ENCODE measurements at regions of chr12 and their contacts with region 1.

Region 1: GRCh38 chr12:9331218-9331626 is 123.0 kb upstream of the PZP start:
- DNase-seq: peak; percentile 91
- H3K4me3 Mint-ChIP-seq: no peak overlapping the region
- H3K27ac Mint-ChIP-seq: no peak overlapping the region
- H3K4me1 Mint-ChIP-seq: peaks cover 18% of the 10 kb centered on the region
- H3K27me3 Mint-ChIP-seq: no peaks in the 10 kb centered on the region

Region 2: DNA sequence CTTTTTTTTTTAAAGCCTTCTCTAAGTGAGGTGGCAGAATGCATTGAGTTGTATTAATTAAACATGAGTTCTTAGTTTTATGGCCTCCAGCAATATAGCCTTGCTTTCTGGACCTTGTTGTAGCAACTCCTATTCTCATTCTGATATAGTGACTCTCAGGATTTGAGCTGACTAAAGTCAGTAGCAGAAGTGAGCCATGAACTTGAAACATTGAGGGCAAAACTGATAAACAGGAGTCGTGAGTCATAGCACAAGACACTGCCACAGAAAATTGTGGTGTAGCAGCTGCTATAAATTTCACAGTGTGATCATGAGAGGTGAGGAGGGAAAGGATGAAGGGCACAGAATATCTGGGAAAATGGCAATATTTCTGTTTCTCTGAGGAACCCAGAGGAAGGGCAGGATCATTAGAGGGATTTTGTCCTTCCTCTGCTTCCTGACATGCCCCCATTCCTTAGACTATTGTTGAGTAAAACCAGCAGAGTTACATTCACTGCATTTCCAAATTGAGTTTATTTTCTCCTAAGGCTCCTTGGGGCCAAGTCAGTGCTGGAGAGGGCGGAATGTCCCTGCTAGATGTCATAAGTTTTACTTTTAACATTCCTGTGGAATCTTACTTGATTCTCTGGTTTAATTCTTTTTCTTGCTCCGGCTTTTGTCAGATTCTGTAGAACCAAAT is 334.4 kb before region 1 on chr12:
- intact Hi-C with region 1: no loop called
- DNase-seq: peak; percentile 70
- H3K4me3 Mint-ChIP-seq: no peak overlapping the region
- H3K27ac Mint-ChIP-seq: no peak overlapping the region
- H3K4me1 Mint-ChIP-seq: peaks cover 15% of the 10 kb centered on the region
- H3K27me3 Mint-ChIP-seq: peaks cover 18% of the 10 kb centered on the region

Region 3: GRCh38 chr12:9364224-9365176 is 33.3 kb after region 1 on chr12:
- intact Hi-C with region 1: loop called (anchors 5 kb)
- DNase-seq: peak; percentile 81
- H3K4me3 Mint-ChIP-seq: peak overlapping the region; percentile 66
- H3K27ac Mint-ChIP-seq: peak overlapping the region; percentile 88
- H3K4me1 Mint-ChIP-seq: peaks cover 40% of the 10 kb centered on the region
- H3K27me3 Mint-ChIP-seq: peaks cover 33% of the 10 kb centered on the region

Region 4: DNA sequence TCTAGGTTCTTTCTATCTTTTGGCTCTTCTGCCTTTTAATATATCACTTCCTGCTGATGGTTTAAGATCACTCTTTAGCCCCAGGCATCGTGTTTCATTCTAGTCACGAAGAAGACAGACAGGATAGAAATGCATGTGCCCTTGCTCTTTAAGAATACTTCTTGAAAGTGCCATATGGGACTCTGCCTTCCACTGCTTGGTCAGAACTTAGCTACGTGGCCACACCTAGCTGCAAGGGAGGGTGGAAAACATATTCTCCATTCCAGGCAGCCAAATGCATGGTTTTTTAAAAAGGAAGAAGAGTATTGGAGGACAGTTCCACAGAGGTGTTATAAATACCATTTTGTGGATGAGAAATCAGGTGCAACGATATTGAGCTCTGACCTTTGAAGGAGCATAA is 133.2 kb after region 1 on chr12:
- intact Hi-C with region 1: loop called (anchors 10 kb)
- DNase-seq: no peak
- H3K4me3 Mint-ChIP-seq: no peak overlapping the region
- H3K27ac Mint-ChIP-seq: no peak overlapping the region
- H3K4me1 Mint-ChIP-seq: no peaks in the 10 kb centered on the region
- H3K27me3 Mint-ChIP-seq: peaks cover 4% of the 10 kb centered on the region

Region 5: DNA sequence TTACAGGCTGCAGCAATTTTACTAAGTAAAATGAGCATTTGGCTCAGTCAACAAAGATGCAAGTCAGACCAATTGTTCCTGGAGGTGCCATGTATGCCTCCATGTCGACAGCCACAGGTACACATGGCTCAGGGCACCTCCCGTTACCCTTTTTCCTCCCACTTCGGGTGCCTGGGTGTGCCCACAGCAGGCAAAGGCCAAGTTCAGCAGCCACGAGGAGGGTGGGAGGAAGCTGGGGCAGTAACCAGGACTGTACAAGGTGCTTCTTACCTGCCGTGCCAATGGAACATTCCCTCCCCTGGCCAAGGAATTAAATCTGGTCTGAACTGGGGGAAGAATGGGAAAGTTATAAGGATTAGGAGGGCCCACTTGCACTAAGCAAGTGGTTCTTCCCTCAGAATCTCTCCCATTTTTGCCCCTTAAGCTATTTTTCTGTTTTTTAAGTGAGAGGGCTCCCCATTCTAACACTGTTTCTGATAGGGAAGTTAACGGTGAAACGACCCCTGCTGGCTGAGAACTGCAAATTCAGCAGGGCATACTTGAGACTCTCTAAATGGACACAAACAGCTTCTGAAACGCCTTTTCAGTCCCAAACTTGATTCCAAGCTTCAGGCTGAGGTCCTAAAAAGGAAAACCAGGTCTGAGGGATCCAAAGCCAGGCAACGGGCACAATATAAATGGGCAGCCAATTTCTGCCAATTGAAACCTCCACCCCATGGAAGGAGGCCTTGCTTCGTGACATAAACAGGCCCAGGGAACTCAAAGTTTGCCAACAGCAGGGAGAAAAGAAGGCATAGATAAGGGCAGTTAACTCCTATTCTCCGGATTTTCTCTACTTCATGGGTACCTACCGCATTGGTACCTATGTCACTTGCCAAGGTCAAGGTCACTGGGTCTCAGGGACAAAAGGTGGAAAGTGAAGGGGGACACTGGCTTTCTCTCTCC is 376.9 kb after region 1 on chr12:
- intact Hi-C with region 1: loop called (anchors 5 kb)
- DNase-seq: peak; percentile 89
- H3K4me3 Mint-ChIP-seq: peak overlapping the region; percentile 77
- H3K27ac Mint-ChIP-seq: peak overlapping the region; percentile 86
- H3K4me1 Mint-ChIP-seq: peaks cover 44% of the 10 kb centered on the region
- H3K27me3 Mint-ChIP-seq: no peaks in the 10 kb centered on the region

Region 6: DNA sequence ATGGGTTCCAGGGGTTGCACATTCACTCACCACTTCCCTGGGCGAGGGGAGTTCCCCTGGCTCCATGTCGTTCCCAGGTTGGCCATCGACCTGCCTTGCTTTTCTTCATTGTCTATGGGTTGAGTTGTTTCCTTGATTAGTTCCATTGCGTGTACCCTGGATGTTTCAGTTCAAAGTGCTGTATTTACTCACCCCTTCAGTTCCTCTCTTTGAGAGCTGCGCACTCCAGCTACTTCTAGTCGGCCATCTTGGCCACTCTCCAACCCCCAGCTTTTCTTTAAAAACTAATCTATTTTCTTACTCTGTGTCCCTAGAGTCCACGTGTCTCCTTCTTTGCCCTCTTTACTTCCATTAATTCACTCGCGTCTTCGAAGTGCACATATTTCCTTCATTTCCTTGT is 589.2 kb after region 1 on chr12:
- intact Hi-C with region 1: no loop called
- DNase-seq: no peak
- H3K4me3 Mint-ChIP-seq: no peak overlapping the region
- H3K27ac Mint-ChIP-seq: no peak overlapping the region
- H3K4me1 Mint-ChIP-seq: peaks cover 14% of the 10 kb centered on the region
- H3K27me3 Mint-ChIP-seq: peaks cover 14% of the 10 kb centered on the region